ENCODE measurements at regions of chr3 and their contacts with region 1.

Region 1: GRCh38 chr3:102536456-102536855 is 101.6 kb downstream of the ZPLD1 start:
- DNase-seq: peak; percentile 58
- H3K4me3 ChIP-seq: no peak overlapping the region
- H3K27ac ChIP-seq: no peak overlapping the region
- H3K4me1 ChIP-seq: no peaks in the 10 kb centered on the region
- H3K27me3 ChIP-seq: peaks cover 4% of the 10 kb centered on the region; the same call in 1 of the 2 replicates

Region 2: GRCh38 chr3:101803173-101803782 is 733.2 kb before region 1 on chr3:
- in situ Hi-C with region 1: loop called (anchors 25 kb)
- DNase-seq: peak; percentile 77
- H3K4me3 ChIP-seq: no peak overlapping the region
- H3K27ac ChIP-seq: no peak overlapping the region
- H3K4me1 ChIP-seq: peaks cover 9% of the 10 kb centered on the region
- H3K27me3 ChIP-seq: no peaks in the 10 kb centered on the region

Region 3: DNA sequence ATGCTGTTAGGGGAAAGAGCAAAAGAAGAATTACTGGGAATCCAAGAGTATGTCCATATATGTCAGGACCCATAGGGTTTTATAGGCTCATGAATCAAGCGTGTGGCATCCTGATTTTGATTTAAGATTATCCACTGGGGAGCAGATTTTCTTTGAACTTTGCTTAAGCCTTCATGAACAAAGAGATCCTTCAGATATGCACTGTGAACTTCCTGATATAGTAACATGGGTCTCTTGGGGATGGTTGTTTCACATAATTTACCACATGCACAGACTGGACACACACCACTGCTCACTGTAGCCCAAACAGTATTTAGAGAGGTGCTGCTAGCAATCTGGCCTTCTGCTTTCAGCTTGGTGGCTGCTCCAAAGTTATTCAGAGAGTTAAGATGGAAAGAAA is 302.6 kb before region 1 on chr3:
- in situ Hi-C with region 1: loop called (anchors 5 kb)
- DNase-seq: no peak
- H3K4me3 ChIP-seq: no peak overlapping the region
- H3K27ac ChIP-seq: no peak overlapping the region
- H3K4me1 ChIP-seq: no peaks in the 10 kb centered on the region
- H3K27me3 ChIP-seq: peaks cover 12% of the 10 kb centered on the region; the same call in 1 of the 2 replicates

Region 4: GRCh38 chr3:103210583-103210982 is 674.1 kb after region 1 on chr3:
- in situ Hi-C with region 1: no loop called
- DNase-seq: no peak
- H3K4me3 ChIP-seq: no peak overlapping the region
- H3K27ac ChIP-seq: no peak overlapping the region
- H3K4me1 ChIP-seq: no peaks in the 10 kb centered on the region
- H3K27me3 ChIP-seq: no peaks in the 10 kb centered on the region